ENCODE measurements at regions of chr9 and their contacts with region 1.

Region 1: GRCh38 chr9:95127249-95128176 is 190.0 kb downstream of the FANCC start:
- DNase-seq: peak; percentile 82
- H3K4me3 ChIP-seq: no peak overlapping the region
- H3K27ac ChIP-seq: no peak overlapping the region
- H3K4me1 ChIP-seq: peaks cover 5% of the 10 kb centered on the region
- H3K27me3 ChIP-seq: no peaks in the 10 kb centered on the region
- CTCF ChIP-seq: peak; percentile 99

Region 2: GRCh38 chr9:94639061-94639998 is 488.2 kb before region 1 on chr9 and contains the start of gene FBP1:
- CTCF ChIA-PET with region 1: interaction called, 13 read pairs
- POLR2A ChIA-PET with region 1: no interaction called
- intact Hi-C with region 1: no loop called
- DNase-seq: no peak
- H3K4me3 ChIP-seq: peak within 1 kb of the TSS; percentile 30
- H3K27ac ChIP-seq: no peak within 1 kb of the TSS
- H3K4me1 ChIP-seq: no peaks in the 10 kb centered on the region
- H3K27me3 ChIP-seq: peaks cover 36% of the 10 kb centered on the region
- CTCF ChIP-seq: no peak
- total RNA-seq, gene FBP1: not detected in 2 replicates

Region 3: DNA sequence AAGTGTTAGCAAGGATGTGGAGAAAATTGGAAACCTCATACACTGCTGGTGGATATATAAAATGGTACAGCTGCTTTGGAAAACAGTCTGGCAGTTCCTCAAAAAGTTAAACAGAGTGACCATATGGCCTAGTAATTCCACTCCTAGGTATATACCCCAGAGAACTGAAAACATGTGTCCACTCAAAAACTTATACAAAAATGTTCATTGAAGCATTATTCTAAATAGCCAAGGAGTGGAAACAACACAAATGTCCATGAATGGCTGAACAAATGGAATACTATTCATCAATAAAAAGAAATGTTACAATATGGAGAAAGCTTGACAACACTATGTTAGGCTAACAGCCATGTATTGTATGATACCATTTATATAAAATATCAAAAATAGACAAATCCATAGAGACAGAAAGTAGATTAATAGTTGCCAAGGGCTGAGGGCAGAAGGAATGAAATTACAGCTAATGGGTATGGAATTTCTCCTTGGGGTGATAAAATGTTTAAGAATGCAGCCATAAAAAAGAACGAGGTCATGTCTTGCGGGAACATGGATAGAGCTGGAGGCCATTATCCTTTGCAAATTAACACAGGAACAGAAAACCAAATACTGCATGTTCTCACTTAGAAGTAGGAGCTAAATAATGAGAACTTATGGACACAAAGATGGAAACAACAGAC is 454.6 kb before region 1 on chr9:
- CTCF ChIA-PET with region 1: interaction called, 12 read pairs
- POLR2A ChIA-PET with region 1: no interaction called
- intact Hi-C with region 1: loop called (anchors 5 kb)
- DNase-seq: no peak
- H3K4me3 ChIP-seq: no peak overlapping the region
- H3K27ac ChIP-seq: no peak overlapping the region
- H3K4me1 ChIP-seq: peaks cover 4% of the 10 kb centered on the region
- H3K27me3 ChIP-seq: no peaks in the 10 kb centered on the region
- CTCF ChIP-seq: no peak

Region 4: GRCh38 chr9:94681508-94681907 is 446.0 kb before region 1 on chr9:
- CTCF ChIA-PET with region 1: interaction called, 28 read pairs
- POLR2A ChIA-PET with region 1: no interaction called
- intact Hi-C with region 1: loop called (anchors 1 kb)
- DNase-seq: peak; percentile 77
- H3K4me3 ChIP-seq: no peak overlapping the region
- H3K27ac ChIP-seq: no peak overlapping the region
- H3K4me1 ChIP-seq: no peaks in the 10 kb centered on the region
- H3K27me3 ChIP-seq: no peaks in the 10 kb centered on the region
- CTCF ChIP-seq: peak; percentile 81

Region 5: DNA sequence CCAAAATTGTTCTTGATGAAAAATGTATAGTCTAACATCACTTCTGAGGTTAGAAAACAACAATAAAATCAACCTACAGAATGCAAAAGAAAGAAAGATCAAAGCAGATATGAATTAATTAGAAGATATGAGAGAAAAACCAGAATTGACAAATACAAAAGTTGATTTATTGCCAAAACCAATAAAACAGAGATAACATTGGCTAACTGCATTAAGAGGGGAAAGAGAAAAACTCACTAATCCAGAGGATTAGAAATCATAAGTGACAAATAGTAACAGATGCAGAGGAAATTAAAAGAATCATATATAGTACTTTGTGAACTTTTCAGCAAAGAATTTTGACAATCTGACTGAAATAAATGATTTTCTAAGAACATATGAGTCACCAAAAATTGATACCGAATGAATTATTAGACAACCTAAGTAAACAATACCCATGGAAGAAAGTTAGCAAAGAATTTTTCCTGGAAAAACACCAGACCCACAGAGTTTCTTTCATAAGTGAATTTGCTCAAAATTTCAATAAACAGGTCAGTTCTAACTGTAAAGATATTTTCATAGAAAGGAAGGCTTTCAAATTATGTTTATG is 233.3 kb before region 1 on chr9:
- CTCF ChIA-PET with region 1: no interaction called
- POLR2A ChIA-PET with region 1: no interaction called
- intact Hi-C with region 1: no loop called
- DNase-seq: no peak
- H3K4me3 ChIP-seq: no peak overlapping the region
- H3K27ac ChIP-seq: no peak overlapping the region
- H3K4me1 ChIP-seq: peaks cover 8% of the 10 kb centered on the region
- H3K27me3 ChIP-seq: no peaks in the 10 kb centered on the region
- CTCF ChIP-seq: no peak

Measured in A673 (cell line).